Psoas muscle (tissue), 8 donors: ENCODE measurements at regions of chrX and their contacts with region 1.

Region 1: DNA sequence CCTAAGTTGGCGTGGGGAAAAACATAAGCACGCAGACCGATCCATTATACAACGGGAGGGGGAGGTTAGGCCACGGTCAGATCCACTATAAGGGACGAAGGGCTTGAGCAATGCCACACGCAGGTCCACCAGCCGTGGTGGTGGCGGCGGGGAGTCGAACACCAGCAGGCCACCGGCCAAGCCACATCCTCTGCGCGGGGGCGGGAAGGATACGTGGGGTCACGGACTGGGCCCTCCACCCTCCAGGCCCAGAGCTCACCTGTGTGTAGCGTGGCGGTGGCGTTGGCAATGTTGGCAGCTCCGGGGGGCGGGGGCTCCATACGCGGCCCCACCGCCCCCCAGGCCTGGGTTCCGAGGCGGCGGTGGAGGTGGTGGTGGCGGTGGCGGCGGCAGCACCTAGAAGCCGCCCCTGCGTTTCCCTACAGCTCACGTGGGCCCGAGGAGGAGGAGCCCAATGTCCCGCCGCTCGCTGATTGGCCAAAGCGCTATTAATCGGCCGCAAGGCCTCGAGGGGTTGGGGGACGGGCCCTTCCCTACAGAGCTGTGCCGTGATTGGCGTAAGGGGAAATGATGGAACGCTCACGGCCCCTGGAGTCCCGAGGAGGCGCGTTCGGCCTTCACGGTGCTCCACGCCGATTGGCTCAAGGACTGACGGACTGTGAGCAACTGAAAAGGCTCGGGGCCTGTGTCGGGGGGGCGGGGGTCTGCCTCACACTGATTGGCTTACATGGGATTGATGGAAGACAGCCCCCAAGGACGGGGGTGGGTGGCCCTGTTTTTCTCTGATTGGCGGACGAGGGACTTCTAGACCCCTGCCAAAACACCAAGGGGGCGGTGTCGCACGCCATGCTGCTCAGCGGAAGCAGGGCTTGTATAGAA is at the start of gene ELK1:
- DNase-seq: peak; percentile 95 to 97
- ATAC-seq: peak; percentile 93 to 95 (median 95)
- H3K4me3 ChIP-seq: peak within 1 kb of the TSS; percentile 72
- H3K27ac ChIP-seq: peak within 1 kb of the TSS; percentile 87
- H3K4me1 ChIP-seq: peaks cover 8% of the 10 kb centered on the region
- H3K27me3 ChIP-seq: no peaks in the 10 kb centered on the region
- CTCF ChIP-seq: no peak
- total RNA-seq, gene ELK1: 30.7 to 55.7 (median 34.2) TPM

Region 2: DNA sequence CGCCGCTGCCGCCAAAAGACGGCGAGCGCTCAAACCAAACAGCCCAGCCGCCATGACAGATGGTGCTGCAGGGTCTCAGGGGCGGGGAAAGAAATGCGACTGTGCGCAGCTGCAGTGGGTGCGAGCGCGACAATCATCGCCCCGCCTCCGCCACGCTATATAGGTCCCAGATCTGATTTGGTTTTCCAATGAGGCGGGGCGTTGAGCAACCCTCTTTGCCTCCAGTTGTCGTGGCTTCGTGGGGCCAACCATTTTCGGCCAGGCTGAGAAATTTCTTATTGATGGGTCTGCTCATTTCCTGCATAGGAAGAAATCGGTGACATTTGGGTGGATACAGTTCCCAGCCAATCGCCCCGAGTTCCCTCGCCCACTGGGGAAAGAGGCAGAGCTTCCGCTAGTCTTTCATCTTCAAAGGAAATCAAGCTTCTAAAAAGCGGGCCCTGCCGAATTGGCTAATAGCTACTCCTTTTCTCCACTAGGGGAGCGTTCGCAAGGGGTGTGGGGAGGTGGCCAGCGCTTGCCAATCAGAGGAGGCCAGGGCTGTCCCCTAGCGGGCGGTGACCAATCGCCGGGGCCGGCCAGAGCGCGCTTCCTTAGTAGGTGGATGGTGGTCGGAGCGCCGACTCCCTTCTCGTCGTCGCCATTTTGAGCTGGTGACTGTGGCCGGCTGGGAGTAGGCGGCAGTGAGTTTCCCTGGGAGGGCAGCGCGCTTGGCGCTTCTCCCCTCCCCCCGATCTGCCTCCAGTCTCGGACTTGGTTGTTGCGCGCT is 505.6 kb before region 1 on chrX and contains the starts of genes NDUFB11 and RBM10:
- intact Hi-C with region 1: loop called in 1 of 2 experiments (anchors 10 kb)
- DNase-seq: peak; percentile 92 to 96
- ATAC-seq: peak; percentile 96 to 97 (median 96)
- H3K4me3 ChIP-seq: peak within 1 kb of the TSS; percentile 76
- H3K27ac ChIP-seq: peak within 1 kb of the TSS; percentile 91
- H3K4me1 ChIP-seq: peaks cover 4% of the 10 kb centered on the region
- H3K27me3 ChIP-seq: no peaks in the 10 kb centered on the region
- CTCF ChIP-seq: peak; percentile 60
- total RNA-seq, gene NDUFB11: 142 to 194 (median 169) TPM
- total RNA-seq, gene RBM10: 21.5 to 25.6 (median 23.6) TPM